H1 (cell line): ENCODE measurements at regions of chr16 and their contacts with region 1.

Region 1: GRCh38 chr16:4506450-4506849 is 30.3 kb downstream of the HMOX2 start:
- DNase-seq: peak in 1 of 2 experiments; percentile 56
- H3K4me3 ChIP-seq: no peak overlapping the region
- H3K27ac ChIP-seq: no peak overlapping the region
- H3K4me1 ChIP-seq: peaks cover 0 to 2% (median 0%) of the 10 kb centered on the region in 4 experiments; a peak in 2 of 7 replicates
- H3K27me3 ChIP-seq: no peaks in the 10 kb centered on the region
- CTCF ChIP-seq: peak; percentile 53 to 99 (median 81)
- EP300 ChIP-seq: no peak
- POLR2A ChIP-seq: no peak
- RAD21 ChIP-seq: peak; percentile 93

Region 2: DNA sequence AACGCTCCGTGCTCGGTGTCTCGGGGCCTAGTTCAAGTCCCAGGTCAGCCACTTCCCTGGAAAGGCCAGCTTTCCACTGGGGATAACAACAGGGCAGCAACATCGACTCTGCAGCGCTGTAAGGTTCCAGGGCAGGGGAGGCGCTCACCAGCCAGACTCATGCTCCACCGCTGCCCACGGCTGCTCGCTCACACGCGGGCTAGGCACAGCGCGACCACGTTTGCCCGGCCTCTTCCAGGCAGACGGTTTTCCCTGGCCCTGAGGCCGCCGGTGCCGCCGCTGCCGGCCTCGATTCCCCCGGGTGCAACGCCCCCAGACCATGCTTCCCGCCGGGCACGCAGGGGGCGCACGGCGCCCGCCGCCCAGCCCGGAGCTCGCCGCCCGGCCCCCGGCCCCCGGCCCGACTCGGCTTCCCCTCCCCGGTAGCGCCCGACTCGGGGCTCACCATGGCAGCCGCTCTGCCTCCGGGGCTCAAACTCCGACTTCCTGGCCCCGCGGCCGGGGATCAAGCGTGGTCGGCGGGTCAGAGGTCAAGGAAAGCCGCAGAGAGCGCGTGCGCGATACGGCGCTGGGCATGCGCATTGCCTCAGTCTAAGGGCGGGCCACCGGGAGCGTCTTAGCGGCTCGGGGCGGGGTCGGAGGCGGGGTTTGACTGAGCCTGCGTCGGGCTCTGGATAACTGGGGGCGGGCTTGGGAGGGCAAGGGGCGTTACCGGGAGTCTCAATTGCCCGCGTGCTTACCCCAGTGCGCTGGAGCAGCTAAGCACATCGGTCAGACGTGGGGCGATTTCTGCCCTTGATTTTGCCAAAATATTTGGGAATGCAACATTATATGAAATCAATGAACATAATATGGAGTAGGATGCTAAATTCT is 155.4 kb before region 1 on chr16 and contains the start of gene PAM16:
- CTCF ChIA-PET with region 1: no interaction called
- POLR2A ChIA-PET with region 1: no interaction called
- DNase-seq: peak; percentile 87 to 100
- H3K4me3 ChIP-seq: peak within 1 kb of the TSS; percentile 91 to 97 (median 96)
- H3K27ac ChIP-seq: peak within 1 kb of the TSS; percentile 85
- H3K4me1 ChIP-seq: peaks cover 0 to 4% (median 0%) of the 10 kb centered on the region in 4 experiments; a peak in 1 of 7 replicates
- H3K27me3 ChIP-seq: peaks cover 0 to 2% (median 0%) of the 10 kb centered on the region in 4 experiments; a peak in 1 of 7 replicates
- CTCF ChIP-seq: no peak
- EP300 ChIP-seq: no peak
- POLR2A ChIP-seq: peak in 1 of 2 experiments; percentile 76; a peak in 2 of 3 replicates
- RAD21 ChIP-seq: no peak
- total RNA-seq, gene PAM16: 78.3 and 84.4 TPM in 2 replicates

Region 3: GRCh38 chr16:4416200-4417032 is 90.0 kb before region 1 on chr16 and contains the start of gene CORO7:
- CTCF ChIA-PET with region 1: no interaction called
- POLR2A ChIA-PET with region 1: no interaction called
- DNase-seq: peak in 1 of 2 experiments; percentile 97
- H3K4me3 ChIP-seq: peak within 1 kb of the TSS; percentile 53 to 78 (median 64)
- H3K27ac ChIP-seq: no peak within 1 kb of the TSS
- H3K4me1 ChIP-seq: peaks cover 2 to 11% (median 4%) of the 10 kb centered on the region in 4 experiments; a peak in 5 of 7 replicates
- H3K27me3 ChIP-seq: no peaks in the 10 kb centered on the region; a peak in 2 of 7 replicates
- CTCF ChIP-seq: no peak
- EP300 ChIP-seq: no peak
- POLR2A ChIP-seq: peak in 1 of 2 experiments; percentile 24; a peak in 1 of 3 replicates
- RAD21 ChIP-seq: no peak
- total RNA-seq, gene CORO7: 25.8 and 29.8 TPM in 2 replicates

Region 4: DNA sequence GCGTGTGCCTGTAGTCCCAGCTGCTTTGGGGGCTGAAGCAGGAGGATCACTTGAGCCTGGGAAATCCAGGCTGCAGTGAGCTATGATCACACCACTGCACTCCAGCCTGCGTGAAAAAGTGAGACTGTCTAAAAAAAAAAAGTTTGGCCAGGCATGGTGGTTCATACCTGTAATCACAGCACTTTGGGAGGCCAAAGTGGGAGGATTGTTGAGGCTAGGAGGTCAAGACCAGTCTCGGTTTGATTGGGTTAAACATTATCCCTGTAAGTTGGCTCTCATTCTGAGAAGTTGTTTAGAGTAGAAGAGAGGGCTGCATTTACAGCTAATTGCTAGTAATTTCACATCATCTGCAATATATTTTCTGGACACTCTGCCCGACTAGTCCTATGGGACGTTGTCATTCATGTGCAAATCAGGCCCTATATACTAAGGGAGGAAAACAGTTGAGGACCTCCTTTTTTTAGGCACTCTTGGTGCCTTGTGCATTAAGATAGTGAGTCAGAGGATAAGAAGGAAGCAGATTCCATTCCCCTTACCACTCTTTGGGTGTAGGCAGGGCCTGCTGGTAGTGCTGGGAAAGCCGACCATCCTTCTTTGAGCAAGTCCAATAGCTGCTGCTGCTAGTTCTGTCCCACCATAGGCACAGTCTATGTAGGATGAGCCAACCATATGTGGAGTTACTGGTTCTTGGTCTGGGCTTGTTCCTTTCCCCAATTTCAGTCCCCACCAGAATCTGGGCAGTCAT is 11.5 kb before region 1 on chr16:
- CTCF ChIA-PET with region 1: interaction called, 19 read pairs
- POLR2A ChIA-PET with region 1: interaction called, 4 read pairs
- DNase-seq: no peak
- H3K4me3 ChIP-seq: no peak overlapping the region
- H3K27ac ChIP-seq: no peak overlapping the region
- H3K4me1 ChIP-seq: no peaks in the 10 kb centered on the region
- H3K27me3 ChIP-seq: no peaks in the 10 kb centered on the region
- CTCF ChIP-seq: no peak
- EP300 ChIP-seq: no peak
- POLR2A ChIP-seq: no peak
- RAD21 ChIP-seq: no peak

Region 5: DNA sequence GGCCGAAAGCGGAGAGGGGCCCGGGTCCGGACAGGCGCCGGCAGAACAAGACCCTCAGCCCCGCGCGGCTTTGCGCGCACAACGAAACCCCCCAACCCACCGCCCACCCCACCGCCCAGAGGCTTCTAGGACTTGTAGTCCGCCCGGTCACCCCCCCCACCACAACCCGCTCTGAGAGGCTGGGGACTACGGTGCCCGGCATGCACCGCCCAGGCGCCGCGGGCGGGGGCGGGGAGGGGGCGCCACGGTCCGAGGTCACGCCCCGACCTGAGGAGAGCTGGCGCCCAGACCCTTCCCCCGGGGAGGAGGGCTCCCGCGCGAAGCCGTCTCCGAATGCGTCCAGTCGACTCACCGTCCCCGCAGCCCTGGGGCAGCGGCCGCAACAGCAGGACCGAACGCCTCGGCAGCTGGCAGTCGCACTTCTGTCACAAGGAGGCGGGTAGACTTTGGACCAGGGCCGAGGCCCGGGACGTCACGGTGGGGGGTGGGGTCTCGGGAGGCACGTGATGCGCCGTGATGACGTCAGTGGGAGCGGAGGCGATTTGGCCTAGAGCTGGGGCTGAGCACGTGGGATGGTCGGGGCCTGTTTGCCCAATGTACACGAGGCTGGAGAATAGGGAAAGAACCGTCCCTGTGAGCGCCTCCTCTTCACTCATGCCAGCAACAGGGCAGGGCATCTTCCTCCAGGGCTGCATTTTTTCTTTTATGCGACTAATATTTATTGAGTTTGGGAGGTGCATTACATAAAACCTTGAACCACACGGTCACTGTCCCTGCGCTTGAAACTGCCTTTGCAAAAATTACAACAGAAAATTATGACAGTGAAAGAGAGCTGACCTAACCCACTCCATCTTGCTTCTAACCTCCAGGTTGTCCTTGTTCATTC is 32.1 kb after region 1 on chr16 and contains the start of gene CDIP1:
- CTCF ChIA-PET with region 1: interaction called, 968 read pairs
- POLR2A ChIA-PET with region 1: interaction called, 4 read pairs
- DNase-seq: peak; percentile 85 to 97
- H3K4me3 ChIP-seq: peak within 1 kb of the TSS; percentile 69 to 87 (median 80)
- H3K27ac ChIP-seq: peak within 1 kb of the TSS; percentile 84
- H3K4me1 ChIP-seq: peaks cover 0 to 8% (median 5%) of the 10 kb centered on the region in 4 experiments; a peak in 5 of 7 replicates
- H3K27me3 ChIP-seq: peaks cover 1 to 14% (median 11%) of the 10 kb centered on the region in 4 experiments
- CTCF ChIP-seq: no peak
- EP300 ChIP-seq: 0 out of 3 replicates have a peak, but pooled peaks of 1 of the 2 experiments have one; percentile 8
- POLR2A ChIP-seq: peak in 1 of 2 experiments; percentile 86; a peak in 2 of 3 replicates
- RAD21 ChIP-seq: no peak
- total RNA-seq, gene CDIP1: 73.7 and 76.3 TPM in 2 replicates

Region 6: DNA sequence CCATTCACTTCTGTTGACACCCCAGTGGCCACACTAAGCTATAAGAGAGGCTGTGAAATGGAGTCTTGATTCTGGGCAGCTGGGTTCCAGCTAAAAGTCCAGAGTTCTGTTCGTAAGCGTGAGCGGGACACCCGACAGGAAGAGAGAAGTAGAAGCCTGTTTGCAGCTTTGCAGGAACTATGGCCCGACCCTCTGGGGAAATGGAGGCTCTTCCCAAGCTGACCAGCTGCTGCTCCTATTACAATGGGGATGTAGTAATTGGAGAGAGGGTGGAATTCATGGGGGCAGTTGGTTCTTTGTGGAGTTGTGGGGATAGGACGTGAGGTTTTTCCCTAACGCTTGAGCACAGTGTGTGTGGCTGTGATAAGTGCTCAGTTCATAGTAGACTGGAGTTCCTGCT is 79.8 kb after region 1 on chr16:
- CTCF ChIA-PET with region 1: interaction called, 157 read pairs
- POLR2A ChIA-PET with region 1: interaction called, 3 read pairs
- DNase-seq: no peak
- H3K4me3 ChIP-seq: no peak overlapping the region
- H3K27ac ChIP-seq: no peak overlapping the region
- H3K4me1 ChIP-seq: no peaks in the 10 kb centered on the region; a peak in 1 of 7 replicates
- H3K27me3 ChIP-seq: no peaks in the 10 kb centered on the region; a peak in 1 of 7 replicates
- CTCF ChIP-seq: no peak
- EP300 ChIP-seq: no peak
- POLR2A ChIP-seq: no peak
- RAD21 ChIP-seq: no peak

Region 7: DNA sequence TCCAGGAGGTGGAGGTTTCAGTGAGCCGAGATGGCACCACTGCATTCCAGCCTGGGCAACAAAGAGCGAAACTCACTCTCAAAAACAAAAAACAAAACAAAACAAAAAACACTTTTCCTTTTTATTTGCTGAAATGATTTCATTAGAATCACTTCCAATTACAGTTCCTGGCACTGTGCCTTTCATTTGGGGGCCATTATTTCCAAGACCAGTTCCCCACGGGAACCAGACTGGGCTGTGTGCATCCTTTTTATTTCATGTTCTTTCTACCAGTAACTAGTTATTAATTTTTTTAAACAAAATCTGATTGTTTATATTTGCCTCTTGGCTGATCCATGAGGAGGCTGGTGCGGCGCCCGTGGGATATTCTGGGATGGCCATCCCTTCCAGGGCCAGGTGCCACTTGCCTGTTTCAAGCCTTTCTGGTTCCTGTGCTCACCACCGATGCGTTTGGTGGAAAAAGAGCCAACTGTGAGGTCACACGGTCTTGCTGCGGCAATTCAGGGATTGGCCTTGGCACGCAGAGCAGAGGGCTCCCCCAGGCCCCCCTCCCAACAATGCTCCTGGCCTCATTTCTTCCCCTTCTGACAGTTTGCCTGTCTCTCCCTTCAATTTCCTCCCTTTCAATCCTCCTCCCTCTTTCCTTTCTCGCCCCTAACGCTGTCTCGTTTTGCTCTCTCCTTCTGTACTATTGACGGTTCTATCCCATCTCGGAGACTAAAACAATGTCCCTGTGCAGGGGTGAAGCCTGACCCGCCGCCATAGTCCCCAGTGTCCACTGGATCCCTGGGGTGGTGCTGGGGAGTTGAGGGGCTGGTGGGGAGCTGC is 94.8 kb after region 1 on chr16:
- CTCF ChIA-PET with region 1: interaction called, 10 read pairs
- POLR2A ChIA-PET with region 1: interaction called, 3 read pairs
- DNase-seq: no peak
- H3K4me3 ChIP-seq: no peak overlapping the region
- H3K27ac ChIP-seq: no peak overlapping the region
- H3K4me1 ChIP-seq: peaks cover 0 to 14% (median 6%) of the 10 kb centered on the region in 4 experiments; a peak in 6 of 7 replicates
- H3K27me3 ChIP-seq: no peaks in the 10 kb centered on the region; a peak in 1 of 7 replicates
- CTCF ChIP-seq: no peak
- EP300 ChIP-seq: no peak
- POLR2A ChIP-seq: no peak
- RAD21 ChIP-seq: no peak

Region 8: GRCh38 chr16:4624015-4624826 is 117.8 kb after region 1 on chr16 and contains the start of gene MGRN1:
- CTCF ChIA-PET with region 1: interaction called, 24 read pairs
- POLR2A ChIA-PET with region 1: interaction called, 3 read pairs
- DNase-seq: peak; percentile 82 to 94
- H3K4me3 ChIP-seq: peak within 1 kb of the TSS; percentile 72 to 97 (median 78)
- H3K27ac ChIP-seq: peak within 1 kb of the TSS; percentile 98
- H3K4me1 ChIP-seq: peaks cover 0 to 7% (median 6%) of the 10 kb centered on the region in 4 experiments; a peak in 6 of 7 replicates
- H3K27me3 ChIP-seq: no peaks in the 10 kb centered on the region
- CTCF ChIP-seq: peak; percentile 89 to 99 (median 98)
- EP300 ChIP-seq: peak in 1 of 2 experiments; percentile 97; a peak in 2 of 3 replicates
- POLR2A ChIP-seq: no peak; a peak in 1 of 3 replicates
- RAD21 ChIP-seq: peak; percentile 68 to 77
- total RNA-seq, gene MGRN1: 79.4 and 82.3 TPM in 2 replicates

Region 9: DNA sequence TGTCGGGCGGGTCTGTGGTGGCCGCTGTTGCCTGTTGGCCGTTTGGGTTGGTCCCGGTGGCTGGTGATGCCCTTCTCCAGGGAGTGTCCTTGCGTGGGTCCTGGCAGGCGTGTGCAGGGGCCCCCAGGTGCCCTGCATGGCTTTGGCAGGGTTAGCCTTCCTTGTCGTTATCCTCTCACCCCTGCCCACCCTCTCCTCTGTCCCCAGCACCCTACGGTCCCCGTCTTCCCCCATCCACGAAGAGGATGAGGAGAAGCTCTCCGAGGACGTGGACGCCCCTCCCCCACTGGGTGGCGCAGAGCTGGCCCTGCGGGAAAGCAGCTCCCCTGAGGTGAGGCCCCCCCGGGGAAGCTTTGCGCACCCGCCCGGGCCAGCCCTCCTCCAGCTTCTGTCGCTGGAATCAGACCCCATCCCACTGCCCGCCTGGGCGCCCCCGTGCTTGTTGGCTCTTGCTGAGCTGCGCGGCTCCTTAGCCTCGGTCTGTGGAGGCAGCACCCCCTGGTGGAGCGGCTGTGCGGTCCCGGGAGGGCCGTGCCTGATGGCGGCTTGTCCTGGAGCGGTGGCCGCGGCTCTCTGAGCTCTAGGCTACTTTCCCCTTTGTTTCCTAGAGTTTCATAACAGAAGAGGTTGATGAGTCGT is 176.3 kb after region 1 on chr16:
- CTCF ChIA-PET with region 1: interaction called, 14 read pairs
- POLR2A ChIA-PET with region 1: interaction called, 3 read pairs
- DNase-seq: peak; percentile 50 to 90
- H3K4me3 ChIP-seq: no peak overlapping the region
- H3K27ac ChIP-seq: no peak overlapping the region
- H3K4me1 ChIP-seq: no peaks in the 10 kb centered on the region
- H3K27me3 ChIP-seq: no peaks in the 10 kb centered on the region
- CTCF ChIP-seq: peak; percentile 78 to 91 (median 81)
- EP300 ChIP-seq: no peak
- POLR2A ChIP-seq: no peak
- RAD21 ChIP-seq: peak; percentile 60 to 78